Activated naive CD8-positive, alpha-beta T cell treated with anti-CD3 and anti-CD28 coated beads, Interleukin-2, amount 10 ng/mL, durations not matched to agents 7 days and 5 days (primary cell): ENCODE measurements at regions of chr12 and their contacts with region 1.

Region 1: GRCh38 chr12:123232807-123233543 is at the starts of genes MPHOSPH9 and MTRFR:
- DNase-seq: peak; percentile 98
- ATAC-seq: peak; percentile 86
- H3K4me3 Mint-ChIP-seq: peak within 1 kb of the TSS; percentile 100
- H3K27ac Mint-ChIP-seq: peak within 1 kb of the TSS; percentile 94
- H3K4me1 Mint-ChIP-seq: peaks cover 57% of the 10 kb centered on the region
- H3K27me3 Mint-ChIP-seq: no peaks in the 10 kb centered on the region
- total RNA-seq, gene MPHOSPH9: 121 to 131 TPM
- total RNA-seq, gene MTRFR: 41.2 to 42.1 TPM

Region 2: GRCh38 chr12:122980183-122981046 is 252.6 kb before region 1 on chr12 and contains the start of gene ARL6IP4:
- POLR2A ChIA-PET with region 1: interaction called, 42 read pairs
- DNase-seq: peak; percentile 87
- ATAC-seq: peak; percentile 78
- H3K4me3 Mint-ChIP-seq: peak within 1 kb of the TSS; percentile 93
- H3K27ac Mint-ChIP-seq: peak within 1 kb of the TSS; percentile 88
- H3K4me1 Mint-ChIP-seq: peaks cover 42% of the 10 kb centered on the region
- H3K27me3 Mint-ChIP-seq: no peaks in the 10 kb centered on the region
- total RNA-seq, gene ARL6IP4: 204 to 211 TPM

Region 3: DNA sequence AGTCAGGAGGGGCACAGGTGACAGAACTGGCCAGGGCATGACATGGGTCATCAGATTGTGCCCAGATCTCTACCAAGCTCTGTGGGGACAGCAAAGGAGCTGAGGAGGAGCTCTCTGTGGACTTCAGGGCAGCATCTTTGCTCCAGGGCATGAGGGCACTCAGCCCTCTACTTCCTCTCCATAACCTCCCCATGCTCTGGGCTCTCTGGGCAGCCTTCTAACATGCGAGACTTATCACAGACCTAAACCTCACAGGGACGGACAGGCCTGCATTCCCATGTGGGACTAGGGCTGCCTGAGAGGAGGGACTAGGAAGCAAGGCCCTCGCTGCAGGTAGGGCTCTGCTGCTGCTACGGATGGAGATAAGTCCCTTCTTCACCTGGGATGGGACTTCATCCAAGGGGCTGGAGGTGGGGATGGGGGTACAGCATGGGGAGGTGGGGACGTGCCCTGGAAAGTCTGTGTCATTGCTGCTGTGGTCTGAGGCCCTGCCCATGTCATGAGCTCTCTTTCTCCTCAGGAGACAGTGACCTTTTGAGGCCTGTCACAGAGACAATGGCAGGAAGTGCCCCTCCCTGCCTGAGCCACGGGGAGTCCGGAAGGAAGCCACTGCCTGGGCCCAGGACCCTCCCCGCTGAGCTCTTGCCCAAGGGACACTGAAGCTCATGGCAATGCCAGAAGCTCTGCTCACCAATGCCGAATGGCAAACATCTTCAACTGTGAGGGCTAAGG is 126.2 kb before region 1 on chr12:
- POLR2A ChIA-PET with region 1: interaction called, 10 read pairs
- DNase-seq: peak; percentile 73
- ATAC-seq: peak; percentile 98
- H3K4me3 Mint-ChIP-seq: peak overlapping the region; percentile 71
- H3K27ac Mint-ChIP-seq: peak overlapping the region; percentile 99
- H3K4me1 Mint-ChIP-seq: peaks cover 56% of the 10 kb centered on the region
- H3K27me3 Mint-ChIP-seq: no peaks in the 10 kb centered on the region

Region 4: GRCh38 chr12:123171967-123172366 is 61.0 kb before region 1 on chr12:
- POLR2A ChIA-PET with region 1: no interaction called
- DNase-seq: no peak
- ATAC-seq: no peak
- H3K4me3 Mint-ChIP-seq: no peak overlapping the region
- H3K27ac Mint-ChIP-seq: no peak overlapping the region
- H3K4me1 Mint-ChIP-seq: peaks cover 3% of the 10 kb centered on the region
- H3K27me3 Mint-ChIP-seq: no peaks in the 10 kb centered on the region

Region 5: GRCh38 chr12:123250484-123251383 is 17.8 kb after region 1 on chr12:
- POLR2A ChIA-PET with region 1: interaction called, 14 read pairs
- DNase-seq: no peak
- ATAC-seq: no peak
- H3K4me3 Mint-ChIP-seq: no peak overlapping the region
- H3K27ac Mint-ChIP-seq: peak overlapping the region; percentile 34
- H3K4me1 Mint-ChIP-seq: peaks cover 30% of the 10 kb centered on the region
- H3K27me3 Mint-ChIP-seq: no peaks in the 10 kb centered on the region

Region 6: DNA sequence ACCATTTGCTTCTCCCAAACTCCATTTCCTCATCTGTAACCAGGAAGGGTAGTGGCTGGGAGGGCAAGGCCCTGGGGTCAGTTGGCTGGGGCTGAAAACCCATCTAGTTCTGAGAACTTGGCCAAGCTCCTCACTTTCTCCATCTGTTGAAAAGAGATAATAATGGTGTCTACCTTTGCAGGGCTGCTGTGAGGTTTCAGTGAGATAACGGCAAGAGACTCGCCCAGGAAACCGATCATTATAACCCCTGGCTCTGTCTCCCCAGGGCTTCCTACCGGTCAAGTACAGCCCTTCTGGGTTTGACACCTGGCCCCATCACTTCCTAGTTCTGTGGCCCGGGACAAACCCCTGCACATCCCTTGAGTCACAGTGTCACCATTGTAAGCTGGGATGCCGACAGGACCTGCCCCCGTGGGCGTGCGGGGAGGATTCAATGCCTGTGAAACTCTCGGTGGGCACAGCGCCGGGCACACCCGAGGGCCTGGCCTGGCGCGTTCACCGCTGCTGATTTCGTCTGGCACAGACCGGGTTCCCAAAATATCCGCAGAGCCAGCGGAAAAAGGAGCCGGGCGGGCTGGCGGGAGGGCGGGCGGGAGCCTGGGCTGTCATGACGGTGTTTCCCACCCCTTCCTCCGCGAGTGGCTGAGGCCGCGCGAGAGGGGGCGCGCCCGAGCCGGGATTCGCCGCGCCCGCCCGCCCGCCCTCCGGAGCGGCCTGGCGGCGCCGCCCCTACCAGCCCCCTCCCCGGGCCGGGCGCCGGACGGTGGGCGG is 155.4 kb after region 1 on chr12:
- POLR2A ChIA-PET with region 1: interaction called, 10 read pairs
- DNase-seq: peak; percentile 86
- ATAC-seq: peak; percentile 50
- H3K4me3 Mint-ChIP-seq: peak overlapping the region; percentile 90
- H3K27ac Mint-ChIP-seq: peak overlapping the region; percentile 93
- H3K4me1 Mint-ChIP-seq: peaks cover 30% of the 10 kb centered on the region
- H3K27me3 Mint-ChIP-seq: no peaks in the 10 kb centered on the region